ENCODE measurements at regions of chr4 and their contacts with region 1.

Region 1: GRCh38 chr4:157045507-157046127 is 30.3 kb upstream of the GLRB start:
- DNase-seq: no peak
- ATAC-seq: peak; percentile 84 to 88

Region 2: DNA sequence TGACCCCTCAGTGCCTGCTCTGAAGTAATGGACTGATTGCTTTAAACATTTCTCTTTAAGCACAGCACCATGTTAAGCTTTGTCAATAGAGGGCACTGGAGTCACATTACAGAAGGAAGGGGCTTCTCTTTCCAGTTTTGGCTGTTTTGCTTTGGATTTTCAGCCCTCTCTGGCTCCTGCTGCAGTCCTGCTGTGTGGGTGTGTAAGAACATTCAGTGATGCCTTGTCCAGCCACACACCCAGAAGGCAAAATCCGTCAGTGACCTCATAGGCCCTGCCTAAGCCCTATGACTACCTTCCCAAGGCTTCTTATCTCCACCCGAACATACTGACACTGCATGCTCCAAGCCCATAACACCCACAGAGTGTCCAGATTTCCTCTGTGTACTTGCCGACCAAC is 876.6 kb before region 1 on chr4:
- intact Hi-C with region 1: loop called in 1 of 2 experiments (anchors 5 kb)
- DNase-seq: peak; percentile 27
- ATAC-seq: peak; percentile 55 to 100

Region 3: GRCh38 chr4:156475322-156475721 is 570.3 kb before region 1 on chr4:
- intact Hi-C with region 1: loop called in 1 of 2 experiments (anchors 5 kb)
- DNase-seq: no peak
- ATAC-seq: peak; percentile 72 to 83

Region 4: GRCh38 chr4:156594624-156595023 is 451.0 kb before region 1 on chr4:
- intact Hi-C with region 1: loop called in 1 of 2 experiments (anchors 10 kb)
- DNase-seq: peak; percentile 40
- ATAC-seq: peak; percentile 12 to 26

Region 5: GRCh38 chr4:156968479-156968984 is 77.1 kb before region 1 on chr4:
- intact Hi-C with region 1: loop called in 1 of 2 experiments (anchors 5 kb)
- DNase-seq: peak; percentile 51
- ATAC-seq: peak; percentile 28 to 60

Region 6: GRCh38 chr4:156983366-156983765 is 62.3 kb before region 1 on chr4:
- intact Hi-C with region 1: loop called in 1 of 2 experiments (anchors 5 kb)
- DNase-seq: no peak
- ATAC-seq: no peak